BJ (cell line): ENCODE measurements at regions of chr10 and their contacts with region 1.

Region 1: GRCh38 chr10:49500418-49500817 is 38.5 kb downstream of the ERCC6 start:
- DNase-seq: no peak
- H3K4me3 ChIP-seq: no peak overlapping the region
- H3K27me3 ChIP-seq: no peaks in the 10 kb centered on the region
- CTCF ChIP-seq: no peak

Region 2: DNA sequence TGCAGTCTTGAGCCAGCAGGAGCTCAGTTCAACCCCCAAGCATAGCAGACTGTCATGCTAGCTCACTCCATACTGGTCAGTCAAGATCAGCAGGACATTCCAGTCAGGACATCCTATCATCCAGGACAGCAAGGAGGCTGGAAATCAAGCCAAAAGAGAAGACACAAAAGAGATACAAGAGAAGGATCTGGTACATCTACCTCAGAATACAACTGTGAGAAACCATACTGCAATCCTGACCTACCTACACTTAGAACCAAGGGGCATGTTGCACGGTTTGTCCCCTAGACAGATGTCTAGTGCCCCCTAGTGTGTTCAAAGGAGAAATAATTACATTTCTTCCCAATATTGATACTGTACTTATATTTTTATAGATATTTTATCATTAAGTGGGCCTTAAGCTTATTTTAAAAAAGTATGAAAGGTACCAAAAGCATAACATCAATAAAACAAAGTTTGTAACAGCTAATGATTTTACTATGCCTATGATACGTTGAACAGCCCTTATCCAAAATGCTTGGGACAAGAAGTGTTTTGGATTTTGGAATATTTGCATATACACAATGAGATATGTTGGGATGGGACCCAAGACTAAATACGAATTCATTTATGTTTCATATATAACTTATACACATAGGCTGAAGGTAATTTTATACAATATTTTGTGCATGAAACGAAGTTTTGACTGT is 11.8 kb after region 1 on chr10:
- CTCF ChIA-PET with region 1: interaction called, 29 read pairs
- POLR2A ChIA-PET with region 1: no interaction called
- DNase-seq: no peak
- H3K4me3 ChIP-seq: no peak overlapping the region
- H3K27me3 ChIP-seq: no peaks in the 10 kb centered on the region
- CTCF ChIP-seq: peak; percentile 56